ENCODE measurements at regions of chr16 and their contacts with region 1.

Region 1: DNA sequence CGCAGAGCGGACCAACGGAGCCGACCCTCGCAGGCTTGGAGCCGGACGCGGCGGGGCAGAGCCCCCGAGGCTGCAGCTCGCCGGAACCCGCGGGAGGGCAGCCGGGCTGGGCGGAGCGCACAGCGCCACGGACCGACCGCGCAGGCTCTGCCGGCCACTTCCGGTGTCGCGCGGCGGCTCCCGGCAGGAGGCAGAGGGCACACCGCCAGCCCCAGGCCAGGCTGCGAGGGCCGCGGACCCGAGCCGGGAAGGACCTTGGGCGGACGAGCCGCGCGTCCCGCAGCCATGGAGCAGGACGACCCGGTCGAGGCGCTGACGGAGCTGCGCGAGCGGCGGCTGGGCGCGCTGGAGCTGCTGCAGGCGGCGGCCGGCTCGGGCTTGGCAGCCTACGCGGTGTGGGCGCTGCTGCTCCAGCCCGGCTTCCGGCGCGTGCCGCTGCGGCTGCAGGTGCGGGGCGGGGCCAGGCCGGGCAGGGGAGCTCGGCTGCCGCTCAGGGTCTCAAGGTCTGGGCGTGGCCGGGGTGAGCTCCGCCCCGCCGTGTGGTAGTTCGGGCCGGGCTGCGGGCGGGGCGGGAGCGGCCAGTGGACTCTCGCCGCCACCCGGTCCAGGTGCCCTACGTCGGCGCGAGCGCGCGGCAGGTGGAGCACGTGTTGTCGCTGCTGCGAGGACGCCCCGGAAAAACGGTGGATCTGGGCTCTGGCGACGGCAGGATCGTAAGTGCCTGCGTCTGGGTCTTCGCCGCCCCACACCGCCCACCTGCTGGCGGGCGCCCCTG is at the start of gene ANTKMT:
- DNase-seq: peak; percentile 97
- ATAC-seq: peak; percentile 77
- H3K4me3 Mint-ChIP-seq: peak within 1 kb of the TSS; percentile 74
- H3K27ac Mint-ChIP-seq: peak within 1 kb of the TSS; percentile 63
- H3K4me1 Mint-ChIP-seq: peaks cover 13% of the 10 kb centered on the region
- H3K27me3 Mint-ChIP-seq: peaks cover 13% of the 10 kb centered on the region
- CTCF ChIP-seq: no peak
- total RNA-seq, gene ANTKMT: 40.6 to 43.1 TPM (median 43.0 TPM) in 3 replicates

Region 2: GRCh38 chr16:610513-611334 is 110.5 kb before region 1 on chr16:
- CTCF ChIA-PET with region 1: no interaction called
- POLR2A ChIA-PET with region 1: no interaction called
- DNase-seq: peak; percentile 83
- ATAC-seq: peak; percentile 92
- H3K4me3 Mint-ChIP-seq: no peak overlapping the region
- H3K27ac Mint-ChIP-seq: peak overlapping the region; percentile 97
- H3K4me1 Mint-ChIP-seq: peaks cover 8% of the 10 kb centered on the region
- H3K27me3 Mint-ChIP-seq: no peaks in the 10 kb centered on the region
- CTCF ChIP-seq: peak; percentile 87

Region 3: DNA sequence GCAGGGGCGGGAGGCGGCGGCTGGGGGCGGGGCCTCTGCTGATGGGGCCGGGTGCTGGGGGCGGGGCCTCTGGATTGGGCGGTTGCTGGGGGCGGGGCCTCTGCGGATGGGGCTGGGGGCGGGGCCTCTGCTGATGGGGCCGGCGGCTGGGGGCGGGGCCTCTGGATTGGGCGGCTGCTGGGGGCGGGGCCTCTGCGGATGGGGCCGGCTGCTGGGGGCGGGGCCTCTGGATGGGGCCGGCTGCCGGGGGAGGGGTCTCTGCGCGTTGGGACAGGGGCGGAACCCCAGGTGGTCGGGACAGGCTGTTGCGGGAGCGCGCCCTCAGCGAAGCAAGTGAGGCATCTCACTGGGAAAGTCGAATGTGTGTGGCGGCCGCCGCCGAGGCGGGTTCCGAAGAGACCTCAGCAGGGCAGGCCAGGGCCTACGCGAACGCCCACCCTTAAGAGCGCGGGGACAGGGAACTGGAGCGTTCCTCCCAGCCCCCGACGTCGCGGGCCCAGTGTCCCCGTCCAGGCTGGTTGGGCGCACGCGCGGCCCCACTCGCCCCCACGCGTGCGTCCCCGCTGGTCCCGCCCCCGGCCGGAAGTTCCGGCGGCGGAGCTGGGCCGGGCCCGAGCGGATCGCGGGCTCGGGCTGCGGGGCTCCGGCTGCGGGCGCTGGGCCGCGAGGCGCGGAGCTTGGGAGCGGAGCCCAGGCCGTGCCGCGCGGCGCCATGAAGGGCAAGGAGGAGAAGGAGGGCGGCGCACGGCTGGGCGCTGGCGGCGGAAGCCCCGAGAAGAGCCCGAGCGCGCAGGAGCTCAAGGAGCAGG is 41.2 kb before region 1 on chr16 and contains the start of gene STUB1:
- CTCF ChIA-PET with region 1: interaction called, 11 read pairs
- POLR2A ChIA-PET with region 1: interaction called, 3 read pairs
- DNase-seq: peak; percentile 97
- ATAC-seq: peak; percentile 41
- H3K4me3 Mint-ChIP-seq: peak within 1 kb of the TSS; percentile 76
- H3K27ac Mint-ChIP-seq: peak within 1 kb of the TSS; percentile 85
- H3K4me1 Mint-ChIP-seq: peaks cover 27% of the 10 kb centered on the region
- H3K27me3 Mint-ChIP-seq: no peaks in the 10 kb centered on the region
- CTCF ChIP-seq: no peak
- total RNA-seq, gene STUB1: 79.0 to 88.2 TPM (median 85.8 TPM) in 3 replicates

Region 4: DNA sequence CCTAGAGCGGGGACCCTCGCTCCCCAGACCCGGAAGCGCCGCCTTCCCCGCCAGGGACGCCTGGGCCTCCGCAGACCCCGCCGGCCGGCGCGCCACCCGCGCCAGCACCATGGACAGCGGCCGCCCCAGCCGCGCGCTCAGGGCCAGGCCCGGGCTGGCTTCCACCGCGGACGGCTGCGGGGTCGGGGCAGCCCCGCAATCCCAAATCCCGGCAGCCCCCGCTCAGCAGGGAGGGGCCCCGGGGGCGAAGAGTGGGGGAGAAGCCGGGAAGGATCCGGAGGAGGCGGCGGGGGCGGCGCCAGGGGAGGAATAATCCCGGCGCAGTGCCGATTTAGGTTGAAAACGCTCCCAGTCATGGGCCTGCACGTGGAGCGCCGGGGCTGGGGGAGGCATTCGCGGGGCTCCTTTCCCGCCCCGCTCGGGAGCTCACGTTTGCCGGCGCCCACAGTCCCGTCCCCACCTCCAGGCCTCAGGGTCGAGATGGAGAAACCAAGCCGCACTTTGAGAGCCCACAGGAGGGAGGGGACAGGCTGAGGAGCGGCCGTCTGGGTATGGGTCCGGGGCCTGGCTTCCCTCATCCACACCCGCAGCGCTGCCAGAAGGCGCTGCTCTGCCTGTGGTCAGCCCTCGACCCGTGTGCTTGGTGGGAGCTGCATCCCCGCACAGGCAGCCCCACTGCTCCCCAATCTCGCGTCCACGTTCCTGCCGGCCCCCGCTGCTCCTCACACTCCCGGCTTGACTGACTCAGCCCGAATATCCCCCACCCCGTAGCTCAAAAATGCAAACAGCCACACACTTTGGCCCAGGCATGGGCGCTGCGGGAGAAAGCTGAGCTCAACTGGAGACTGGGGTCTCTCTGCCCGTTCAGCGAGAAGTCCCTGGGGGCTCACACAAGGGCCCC is 20.2 kb before region 1 on chr16:
- CTCF ChIA-PET with region 1: interaction called, 25 read pairs
- POLR2A ChIA-PET with region 1: interaction called, 5 read pairs
- DNase-seq: peak; percentile 76
- ATAC-seq: peak; percentile 72
- H3K4me3 Mint-ChIP-seq: no peak overlapping the region
- H3K27ac Mint-ChIP-seq: no peak overlapping the region
- H3K4me1 Mint-ChIP-seq: no peaks in the 10 kb centered on the region
- H3K27me3 Mint-ChIP-seq: peaks cover 82% of the 10 kb centered on the region
- CTCF ChIP-seq: no peak

Region 5: DNA sequence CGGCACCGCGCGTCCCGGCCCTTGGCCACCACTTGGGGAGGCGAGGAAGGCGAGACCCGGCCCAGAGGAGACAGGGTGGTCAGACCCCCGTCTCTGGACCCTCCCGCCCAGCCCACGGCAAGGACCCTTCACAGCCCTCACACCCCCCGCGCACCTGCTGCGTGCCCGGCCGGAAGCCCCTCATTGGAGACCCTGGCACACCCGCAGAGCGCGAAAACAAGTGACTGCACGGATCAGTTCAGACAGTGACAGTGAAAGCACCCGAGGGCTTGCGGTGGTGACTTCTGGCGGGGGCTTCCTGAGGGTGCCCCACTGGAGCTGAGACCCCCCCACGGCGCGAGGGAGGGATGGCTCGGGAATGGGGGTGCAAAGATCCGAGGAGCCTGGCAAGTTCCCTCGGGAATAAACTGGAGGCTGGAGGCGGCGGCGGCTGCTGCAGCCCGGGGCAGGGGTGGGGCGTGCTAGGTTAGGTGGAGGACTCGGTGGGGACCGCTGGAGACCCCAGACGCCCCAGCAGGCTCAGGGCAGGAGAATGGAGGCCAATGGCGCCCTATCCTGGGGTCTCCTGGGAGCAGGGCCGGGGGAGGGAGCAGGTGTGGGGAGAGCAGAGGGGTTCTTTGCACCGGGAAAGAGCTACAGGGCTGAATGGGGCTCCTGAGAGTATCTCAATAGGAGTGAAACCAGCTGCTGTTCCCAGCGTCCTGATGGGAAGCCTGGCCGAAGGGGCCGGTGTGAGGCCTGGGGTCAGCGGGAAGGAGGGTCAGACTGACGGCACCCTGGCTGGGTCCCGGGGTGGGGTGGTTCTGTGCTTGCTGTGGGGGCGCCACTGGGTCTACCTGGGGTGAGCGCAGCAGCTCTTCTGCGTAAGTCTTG is 14.8 kb before region 1 on chr16:
- CTCF ChIA-PET with region 1: interaction called, 90 read pairs
- POLR2A ChIA-PET with region 1: interaction called, 3 read pairs
- DNase-seq: no peak
- ATAC-seq: peak; percentile 13
- H3K4me3 Mint-ChIP-seq: peak overlapping the region; percentile 72
- H3K27ac Mint-ChIP-seq: no peak overlapping the region
- H3K4me1 Mint-ChIP-seq: no peaks in the 10 kb centered on the region
- H3K27me3 Mint-ChIP-seq: peaks cover 74% of the 10 kb centered on the region
- CTCF ChIP-seq: no peak

Region 6: DNA sequence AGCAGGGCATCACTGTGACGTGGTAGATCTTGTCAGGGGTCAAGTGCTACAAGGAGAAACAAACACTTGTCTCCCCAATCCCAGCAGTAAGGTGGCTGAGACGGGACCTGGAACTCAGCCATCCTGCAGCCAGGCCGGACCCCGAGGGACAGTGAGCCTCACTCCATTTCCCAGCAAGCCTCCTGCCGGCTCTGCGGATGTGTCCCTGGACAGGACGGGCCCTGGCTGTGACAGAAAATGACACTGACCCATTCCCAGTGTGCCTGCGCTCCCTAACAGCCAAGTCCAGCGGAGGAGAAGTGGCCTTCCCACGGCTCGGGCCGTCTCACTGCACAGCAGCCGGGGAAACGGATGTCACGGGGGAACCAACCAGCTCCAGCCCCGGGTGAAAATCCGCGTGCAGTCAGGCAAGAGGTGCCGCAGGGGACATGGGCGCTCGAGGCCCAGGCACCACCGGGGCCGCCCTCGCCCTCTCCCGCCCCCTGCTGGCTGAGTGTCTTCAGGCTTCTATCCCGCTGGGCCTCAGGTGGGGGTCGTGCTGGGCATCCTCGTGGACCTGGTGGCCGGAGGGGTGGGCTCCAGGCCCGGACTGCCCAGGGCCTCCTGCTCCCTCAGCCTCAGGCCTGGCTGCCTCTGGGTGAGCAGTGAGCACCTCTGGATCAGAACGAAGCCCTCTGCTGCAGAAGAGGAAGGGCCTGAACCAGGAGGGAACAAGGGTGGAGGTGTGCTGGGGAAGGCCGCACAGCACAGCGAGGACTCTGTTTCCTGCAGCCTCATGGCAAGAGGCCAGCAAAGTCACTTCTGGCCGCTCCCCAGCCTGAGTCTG is 12.4 kb after region 1 on chr16:
- CTCF ChIA-PET with region 1: interaction called, 90 read pairs
- POLR2A ChIA-PET with region 1: interaction called, 6 read pairs
- DNase-seq: peak; percentile 59
- ATAC-seq: no peak; the same call in 1 of the 2 replicates
- H3K4me3 Mint-ChIP-seq: no peak overlapping the region
- H3K27ac Mint-ChIP-seq: no peak overlapping the region
- H3K4me1 Mint-ChIP-seq: peaks cover 9% of the 10 kb centered on the region
- H3K27me3 Mint-ChIP-seq: no peaks in the 10 kb centered on the region
- CTCF ChIP-seq: peak; percentile 19; the same call in 1 of the 2 replicates

Region 7: GRCh38 chr16:740764-741505 is 19.8 kb after region 1 on chr16 and contains the start of gene CIAO3:
- CTCF ChIA-PET with region 1: interaction called, 28 read pairs
- POLR2A ChIA-PET with region 1: interaction called, 10 read pairs
- DNase-seq: peak; percentile 93
- ATAC-seq: peak; percentile 71
- H3K4me3 Mint-ChIP-seq: peak within 1 kb of the TSS; percentile 79
- H3K27ac Mint-ChIP-seq: peak within 1 kb of the TSS; percentile 78
- H3K4me1 Mint-ChIP-seq: peaks cover 15% of the 10 kb centered on the region
- H3K27me3 Mint-ChIP-seq: no peaks in the 10 kb centered on the region
- CTCF ChIP-seq: peak; percentile 79
- total RNA-seq, gene CIAO3: 32.8 to 50.9 TPM (median 32.8 TPM) in 3 replicates

Region 8: GRCh38 chr16:788394-789126 is 67.4 kb after region 1 on chr16 and contains the start of gene CHTF18:
- CTCF ChIA-PET with region 1: interaction called, 22 read pairs
- POLR2A ChIA-PET with region 1: interaction called, 4 read pairs
- DNase-seq: peak; percentile 92
- ATAC-seq: peak; percentile 84
- H3K4me3 Mint-ChIP-seq: peak within 1 kb of the TSS; percentile 83
- H3K27ac Mint-ChIP-seq: no peak within 1 kb of the TSS; the same call in 1 of the 2 replicates
- H3K4me1 Mint-ChIP-seq: no peaks in the 10 kb centered on the region
- H3K27me3 Mint-ChIP-seq: no peaks in the 10 kb centered on the region
- CTCF ChIP-seq: no peak
- total RNA-seq, gene CHTF18: 177 to 183 TPM (median 181 TPM) in 3 replicates

Region 9: GRCh38 chr16:914440-914839 is 193.3 kb after region 1 on chr16:
- CTCF ChIA-PET with region 1: no interaction called
- POLR2A ChIA-PET with region 1: no interaction called
- DNase-seq: no peak
- ATAC-seq: no peak
- H3K4me3 Mint-ChIP-seq: no peak overlapping the region
- H3K27ac Mint-ChIP-seq: no peak overlapping the region
- H3K4me1 Mint-ChIP-seq: no peaks in the 10 kb centered on the region
- H3K27me3 Mint-ChIP-seq: no peaks in the 10 kb centered on the region
- CTCF ChIP-seq: no peak

Measured in WTC11 (cell line).